ENCODE measurements at regions of chr10 and their contacts with region 1.

Region 1: GRCh38 chr10:1036341-1036791 is 10.7 kb upstream of the IDI2 start:
- DNase-seq: peak in 1 of 4 experiments; percentile 28
- ATAC-seq: peak; percentile 52
- H3K4me3 ChIP-seq: no peak overlapping the region
- H3K27ac ChIP-seq: no peak overlapping the region
- H3K4me1 ChIP-seq: peaks cover 2 to 3% of the 10 kb centered on the region in 2 experiments; a peak in 2 of 5 replicates
- H3K27me3 ChIP-seq: no peaks in the 10 kb centered on the region
- CTCF ChIP-seq: no peak
- EP300 ChIP-seq: no peak
- POLR2A ChIP-seq: no peak
- RAD21 ChIP-seq: no peak

Region 2: GRCh38 chr10:1010703-1011102 is 25.7 kb before region 1 on chr10:
- CTCF ChIA-PET with region 1: no interaction called
- POLR2A ChIA-PET with region 1: interaction called, 11 read pairs
- in situ Hi-C with region 1: no loop called
- intact Hi-C with region 1: no loop called
- DNase-seq: no peak
- ATAC-seq: no peak
- H3K4me3 ChIP-seq: no peak overlapping the region
- H3K27ac ChIP-seq: no peak overlapping the region
- H3K4me1 ChIP-seq: peaks cover 5 to 13% of the 10 kb centered on the region in 2 experiments; a peak in 4 of 5 replicates
- H3K27me3 ChIP-seq: no peaks in the 10 kb centered on the region
- CTCF ChIP-seq: no peak
- EP300 ChIP-seq: no peak
- POLR2A ChIP-seq: no peak
- RAD21 ChIP-seq: no peak

Region 3: GRCh38 chr10:1048732-1049424 is 12.5 kb after region 1 on chr10 and contains the start of gene IDI1:
- CTCF ChIA-PET with region 1: no interaction called
- POLR2A ChIA-PET with region 1: interaction called, 25 read pairs
- in situ Hi-C with region 1: no loop called
- intact Hi-C with region 1: no loop called
- DNase-seq: peak; percentile 92 to 98 (median 96)
- ATAC-seq: peak; percentile 93
- H3K4me3 ChIP-seq: peak within 1 kb of the TSS; percentile 94
- H3K27ac ChIP-seq: peak within 1 kb of the TSS; percentile 93
- H3K4me1 ChIP-seq: peaks cover 21 to 31% of the 10 kb centered on the region in 2 experiments
- H3K27me3 ChIP-seq: no peaks in the 10 kb centered on the region
- CTCF ChIP-seq: no peak
- EP300 ChIP-seq: no peak; the same call in none of the 2 replicates
- POLR2A ChIP-seq: peak; percentile 93
- RAD21 ChIP-seq: 0 out of 4 replicates have a peak, but pooled peaks of 1 of the 2 experiments have one; percentile 8
- polyA plus RNA-seq, gene IDI1: 167 to 189 TPM

Measured in K562 (cell line).